Heart right ventricle (tissue), 16 donors: ENCODE measurements at regions of chr10 and their contacts with region 1.

Region 1: DNA sequence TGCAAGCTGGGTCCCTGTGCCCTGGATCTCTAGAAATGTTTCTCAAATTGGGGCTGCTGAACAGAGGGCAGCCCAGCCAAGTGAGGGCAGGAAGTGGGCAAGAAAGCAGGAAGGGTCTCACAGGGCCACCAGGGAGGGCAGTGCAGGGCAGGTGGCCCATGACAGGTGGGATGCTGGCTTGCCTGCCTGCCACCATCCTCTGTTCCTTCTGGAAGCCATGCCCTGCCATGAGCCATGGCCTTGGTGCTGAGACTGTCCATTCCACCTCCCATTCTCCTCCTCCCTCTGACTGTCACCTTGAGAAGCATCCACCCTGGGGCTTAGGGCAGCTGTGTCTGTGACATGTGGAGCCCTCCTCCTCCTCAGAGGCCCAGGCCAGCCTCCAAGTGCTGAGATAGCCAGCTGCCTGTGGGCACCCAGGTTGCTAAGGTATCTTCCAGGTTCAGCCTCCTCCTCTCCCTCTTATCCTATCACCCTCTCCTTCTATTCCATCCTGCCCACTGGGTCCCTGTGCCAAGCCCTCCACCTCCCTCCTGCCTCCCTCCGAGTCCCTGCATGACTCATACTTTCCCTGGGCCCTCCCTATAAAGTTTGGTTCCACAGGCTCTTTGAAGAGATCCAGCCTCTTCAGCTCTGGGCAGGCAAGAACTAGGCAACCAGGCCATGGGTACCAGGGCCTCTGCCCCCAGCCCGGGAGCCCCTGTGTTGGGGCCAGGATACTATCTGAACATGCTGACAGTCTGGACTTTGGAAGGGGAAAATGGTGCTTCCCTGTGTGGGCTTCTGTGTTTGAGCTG is 1.3 kb downstream of the VSIR start:
- DNase-seq: peak; percentile 76 to 89
- ATAC-seq: peak; percentile 46 to 80 (median 74)
- H3K4me3 ChIP-seq: peak overlapping the region; percentile 64 to 96 (median 92)
- H3K27ac ChIP-seq: peak overlapping the region; percentile 77 to 99 (median 98)
- H3K4me1 ChIP-seq: peaks cover 32 to 96% (median 79%) of the 10 kb centered on the region in 9 donors
- H3K27me3 ChIP-seq: no peaks in the 10 kb centered on the region
- CTCF ChIP-seq: no peak

Region 2: DNA sequence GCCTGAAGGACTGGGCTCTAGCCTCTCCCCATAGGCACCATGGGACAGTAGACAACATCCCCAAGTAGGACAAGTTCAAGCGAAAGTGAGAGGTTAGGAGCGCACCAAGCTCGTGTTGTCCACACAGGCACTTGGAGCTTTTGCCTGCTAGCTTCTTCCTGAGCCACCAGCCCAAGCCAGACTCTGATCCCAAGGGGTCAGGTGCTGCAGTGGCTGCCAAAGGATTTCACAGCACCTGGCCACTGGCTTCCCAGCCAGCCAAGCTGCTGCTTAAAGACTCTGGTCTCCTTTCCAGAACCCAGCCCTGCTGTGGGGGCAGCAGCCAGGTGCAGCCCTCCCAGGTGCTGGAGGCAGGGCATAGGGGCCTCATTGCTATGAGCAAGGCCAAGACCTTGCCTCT is 592.6 kb before region 1 on chr10:
- intact Hi-C with region 1: no loop called
- DNase-seq: no peak
- ATAC-seq: no peak
- H3K4me3 ChIP-seq: no peak overlapping the region
- H3K27ac ChIP-seq: no peak overlapping the region
- H3K4me1 ChIP-seq: no peaks in the 10 kb centered on the region
- H3K27me3 ChIP-seq: peaks cover 0 to 9% (median 0%) of the 10 kb centered on the region in 7 donors
- CTCF ChIP-seq: no peak

Region 3: GRCh38 chr10:71713135-71714030 is 58.6 kb before region 1 on chr10:
- intact Hi-C with region 1: loop called in 7 of 10 experiments (anchors 1 to 10 kb)
- DNase-seq: peak; percentile 85 to 88
- ATAC-seq: peak; percentile 78 to 90 (median 84)
- H3K4me3 ChIP-seq: peak overlapping the region in 4 of 10 donors; percentile 9 to 32 (median 16)
- H3K27ac ChIP-seq: peak overlapping the region; percentile 47 to 92 (median 89)
- H3K4me1 ChIP-seq: peaks cover 26 to 70% (median 62%) of the 10 kb centered on the region in 9 donors
- H3K27me3 ChIP-seq: no peaks in the 10 kb centered on the region
- CTCF ChIP-seq: peak in 4 of 9 donors; percentile 9 to 35 (median 20)

Region 4: DNA sequence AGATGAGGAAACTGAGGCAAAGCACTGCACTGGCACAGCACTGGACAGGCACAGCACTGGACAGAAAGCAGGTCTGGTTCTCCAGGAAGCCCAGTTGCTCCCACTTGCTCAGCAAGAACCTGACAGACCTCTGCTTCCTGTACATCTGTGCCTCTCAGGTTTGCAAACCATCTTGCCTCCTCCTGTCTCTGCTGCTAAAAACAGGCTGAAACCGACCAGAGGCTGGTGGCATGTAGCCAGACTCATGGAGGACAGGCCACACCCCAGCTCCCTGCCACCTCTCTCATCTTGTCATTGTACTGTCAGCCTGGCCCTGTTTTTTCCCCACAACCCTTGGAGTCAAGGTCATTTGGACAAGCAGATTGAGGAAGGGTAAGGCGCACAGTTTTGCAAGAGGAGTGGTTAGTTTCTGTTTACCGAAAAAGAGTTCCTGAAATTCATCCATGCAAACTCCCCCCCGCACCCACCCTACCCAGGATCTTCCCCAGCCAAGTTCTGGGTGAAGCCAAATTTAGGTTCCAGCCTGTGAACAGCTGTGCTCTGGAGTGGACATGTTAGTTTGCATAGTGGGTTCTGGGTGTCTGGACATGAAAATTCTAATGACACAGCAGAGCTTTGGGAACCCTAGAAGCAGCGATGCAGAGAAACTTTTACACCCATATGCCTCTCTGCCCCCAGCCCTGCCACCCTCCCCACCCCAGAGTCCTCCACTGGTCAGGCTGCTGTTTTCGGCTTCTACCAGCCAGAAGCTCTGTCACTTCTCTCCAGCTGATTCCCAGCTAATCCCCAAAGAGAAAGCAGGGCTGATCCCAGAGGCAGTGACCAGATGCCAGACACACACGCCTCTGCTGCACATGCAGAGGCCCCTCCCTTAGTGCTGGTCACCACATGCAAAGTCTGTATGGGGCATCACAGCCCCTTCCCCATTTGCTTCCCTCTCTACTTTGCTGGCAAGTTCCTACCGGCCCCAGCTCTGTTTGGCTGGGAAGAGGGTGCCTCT is 44.0 kb before region 1 on chr10:
- intact Hi-C with region 1: loop called in 6 of 10 experiments (anchors 5 kb)
- DNase-seq: peak; percentile 64 to 79
- ATAC-seq: peak; percentile 56 to 83 (median 72)
- H3K4me3 ChIP-seq: peak overlapping the region in 2 of 10 donors; percentile 2 to 11
- H3K27ac ChIP-seq: peak overlapping the region; percentile 39 to 93 (median 77)
- H3K4me1 ChIP-seq: peaks cover 13 to 59% (median 44%) of the 10 kb centered on the region in 9 donors
- H3K27me3 ChIP-seq: no peaks in the 10 kb centered on the region
- CTCF ChIP-seq: no peak

Region 5: GRCh38 chr10:71817831-71818655 is 46.0 kb after region 1 on chr10:
- intact Hi-C with region 1: loop called in 1 of 10 experiments (anchors 5 kb)
- DNase-seq: peak; percentile 43 to 73
- ATAC-seq: peak; percentile 40 to 83 (median 60)
- H3K4me3 ChIP-seq: no peak overlapping the region
- H3K27ac ChIP-seq: peak overlapping the region; percentile 56 to 86 (median 72)
- H3K4me1 ChIP-seq: peaks cover 16 to 52% (median 34%) of the 10 kb centered on the region in 9 donors
- H3K27me3 ChIP-seq: no peaks in the 10 kb centered on the region
- CTCF ChIP-seq: no peak

Region 6: GRCh38 chr10:71963756-71964668 is 192.0 kb after region 1 on chr10 and contains the start of gene CHST3:
- intact Hi-C with region 1: no loop called
- DNase-seq: peak; percentile 85 to 88
- ATAC-seq: peak; percentile 77 to 91 (median 86)
- H3K4me3 ChIP-seq: peak within 1 kb of the TSS; percentile 67 to 95 (median 84)
- H3K27ac ChIP-seq: peak within 1 kb of the TSS; percentile 92 to 100 (median 98)
- H3K4me1 ChIP-seq: peaks cover 11 to 58% (median 44%) of the 10 kb centered on the region in 9 donors
- H3K27me3 ChIP-seq: peaks cover 0 to 28% (median 0%) of the 10 kb centered on the region in 7 donors
- CTCF ChIP-seq: peak in 2 of 9 donors; percentile 3 to 27
- total RNA-seq, gene CHST3: 14.5 to 28.7 (median 21.3) TPM